Caco-2 (cell line): ENCODE measurements at regions of chr10 and their contacts with region 1.

Region 1: DNA sequence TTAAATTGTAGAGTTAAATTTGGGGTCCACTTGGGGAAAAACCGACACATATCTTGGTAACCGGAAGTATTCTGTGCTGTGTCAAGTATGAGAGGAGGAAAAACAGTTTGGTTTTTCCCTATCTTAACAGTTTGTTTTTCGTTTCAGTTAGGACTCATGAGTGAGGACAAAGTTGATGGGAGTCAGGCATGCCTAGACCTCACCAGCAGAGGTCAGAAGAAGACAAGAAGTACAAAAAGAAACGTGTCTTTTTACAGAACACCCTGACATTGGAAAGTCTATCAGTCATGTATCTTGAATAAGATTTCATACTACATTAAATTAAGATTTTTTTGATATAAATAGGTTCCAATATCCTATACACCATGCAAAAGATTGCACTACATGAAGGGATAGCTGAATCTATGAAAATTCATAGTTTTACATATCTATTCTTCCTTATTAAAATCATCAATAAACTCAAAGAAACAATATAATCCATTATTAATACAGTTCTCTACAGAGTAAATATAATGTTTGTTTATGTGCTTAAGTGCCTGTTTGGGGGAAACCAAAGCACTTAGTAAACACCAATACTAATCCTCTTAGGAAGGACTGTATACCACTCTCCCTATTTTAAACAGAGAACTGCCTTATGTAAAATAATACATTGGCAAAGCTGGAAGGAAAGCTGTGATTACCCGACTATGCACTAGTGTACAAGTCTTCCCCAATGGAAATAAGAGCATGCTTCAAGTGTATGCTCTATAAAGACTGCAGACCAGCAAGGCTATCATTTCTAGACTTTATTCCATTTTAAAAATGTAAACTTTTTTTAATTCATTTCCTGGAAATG is 95.6 kb downstream of the USP6NL start:
- DNase-seq: peak; percentile 57 to 74
- H3K4me3 ChIP-seq: no peak overlapping the region
- H3K4me3 Mint-ChIP-seq: no peak overlapping the region
- H3K27ac Mint-ChIP-seq: no peak overlapping the region
- H3K4me1 ChIP-seq: no peaks in the 10 kb centered on the region
- H3K4me1 Mint-ChIP-seq: no peaks in the 10 kb centered on the region
- H3K27me3 ChIP-seq: no peaks in the 10 kb centered on the region
- H3K27me3 Mint-ChIP-seq: no peaks in the 10 kb centered on the region
- CTCF ChIP-seq: peak; percentile 79 to 97

Region 2: GRCh38 chr10:11499425-11500071 is 16.3 kb before region 1 on chr10:
- CTCF ChIA-PET with region 1: no interaction called
- POLR2A ChIA-PET with region 1: no interaction called
- intact Hi-C with region 1: no loop called
- DNase-seq: no peak
- H3K4me3 ChIP-seq: no peak overlapping the region
- H3K4me3 Mint-ChIP-seq: no peak overlapping the region
- H3K27ac Mint-ChIP-seq: no peak overlapping the region
- H3K4me1 ChIP-seq: no peaks in the 10 kb centered on the region
- H3K4me1 Mint-ChIP-seq: peaks cover 2% of the 10 kb centered on the region
- H3K27me3 ChIP-seq: no peaks in the 10 kb centered on the region
- H3K27me3 Mint-ChIP-seq: no peaks in the 10 kb centered on the region
- CTCF ChIP-seq: no peak

Region 3: GRCh38 chr10:11611248-11612020 is 95.6 kb after region 1 on chr10 and contains the start of gene USP6NL:
- CTCF ChIA-PET with region 1: interaction called, 3 read pairs
- POLR2A ChIA-PET with region 1: no interaction called
- intact Hi-C with region 1: loop called (anchors 2 kb)
- DNase-seq: peak; percentile 95 to 99
- H3K4me3 ChIP-seq: peak within 1 kb of the TSS; percentile 94
- H3K4me3 Mint-ChIP-seq: peak within 1 kb of the TSS; percentile 82
- H3K27ac Mint-ChIP-seq: peak within 1 kb of the TSS; percentile 81
- H3K4me1 ChIP-seq: peaks cover 46% of the 10 kb centered on the region
- H3K4me1 Mint-ChIP-seq: peaks cover 25% of the 10 kb centered on the region
- H3K27me3 ChIP-seq: no peaks in the 10 kb centered on the region
- H3K27me3 Mint-ChIP-seq: no peaks in the 10 kb centered on the region
- CTCF ChIP-seq: no peak
- total RNA-seq, gene USP6NL: 34.1 and 35.6 TPM in 2 replicates

Region 4: GRCh38 chr10:11715815-11716494 is 200.1 kb after region 1 on chr10:
- CTCF ChIA-PET with region 1: no interaction called
- POLR2A ChIA-PET with region 1: no interaction called
- intact Hi-C with region 1: loop called (anchors 2 kb)
- DNase-seq: peak; percentile 50 to 63
- H3K4me3 ChIP-seq: no peak overlapping the region
- H3K4me3 Mint-ChIP-seq: peak overlapping the region; percentile 1
- H3K27ac Mint-ChIP-seq: no peak overlapping the region
- H3K4me1 ChIP-seq: peaks cover 14% of the 10 kb centered on the region
- H3K4me1 Mint-ChIP-seq: peaks cover 12% of the 10 kb centered on the region
- H3K27me3 ChIP-seq: no peaks in the 10 kb centered on the region
- H3K27me3 Mint-ChIP-seq: no peaks in the 10 kb centered on the region
- CTCF ChIP-seq: no peak

Region 5: GRCh38 chr10:11724938-11725776 is 209.3 kb after region 1 on chr10:
- CTCF ChIA-PET with region 1: interaction called, 23 read pairs
- POLR2A ChIA-PET with region 1: no interaction called
- intact Hi-C with region 1: loop called (anchors 1 kb)
- DNase-seq: peak in 1 of 2 experiments; percentile 75
- H3K4me3 ChIP-seq: no peak overlapping the region
- H3K4me3 Mint-ChIP-seq: no peak overlapping the region
- H3K27ac Mint-ChIP-seq: no peak overlapping the region
- H3K4me1 ChIP-seq: no peaks in the 10 kb centered on the region
- H3K4me1 Mint-ChIP-seq: peaks cover 8% of the 10 kb centered on the region
- H3K27me3 ChIP-seq: no peaks in the 10 kb centered on the region
- H3K27me3 Mint-ChIP-seq: no peaks in the 10 kb centered on the region
- CTCF ChIP-seq: peak; percentile 86 to 94

Region 6: GRCh38 chr10:11986593-11987216 is 470.9 kb after region 1 on chr10:
- CTCF ChIA-PET with region 1: no interaction called
- POLR2A ChIA-PET with region 1: no interaction called
- intact Hi-C with region 1: loop called (anchors 5 kb)
- DNase-seq: peak; percentile 82 to 91
- H3K4me3 ChIP-seq: no peak overlapping the region
- H3K4me3 Mint-ChIP-seq: peak overlapping the region; percentile 20
- H3K27ac Mint-ChIP-seq: peak overlapping the region; percentile 20
- H3K4me1 ChIP-seq: peaks cover 11% of the 10 kb centered on the region
- H3K4me1 Mint-ChIP-seq: peaks cover 12% of the 10 kb centered on the region
- H3K27me3 ChIP-seq: no peaks in the 10 kb centered on the region
- H3K27me3 Mint-ChIP-seq: no peaks in the 10 kb centered on the region
- CTCF ChIP-seq: peak; percentile 96